Heart left ventricle (tissue), 16 donors: ENCODE measurements at regions of chr18 and their contacts with region 1.

Region 1: GRCh38 chr18:31255953-31256352 is 62.0 kb upstream of the DSG1 start:
- DNase-seq: no peak
- ATAC-seq: no peak
- H3K4me3 ChIP-seq: no peak overlapping the region
- H3K27ac ChIP-seq: no peak overlapping the region
- H3K4me1 ChIP-seq: peaks cover 0 to 5% (median 0%) of the 10 kb centered on the region in 12 donors
- H3K27me3 ChIP-seq: no peaks in the 10 kb centered on the region
- CTCF ChIP-seq: no peak
- POLR2A ChIP-seq: no peak

Region 2: DNA sequence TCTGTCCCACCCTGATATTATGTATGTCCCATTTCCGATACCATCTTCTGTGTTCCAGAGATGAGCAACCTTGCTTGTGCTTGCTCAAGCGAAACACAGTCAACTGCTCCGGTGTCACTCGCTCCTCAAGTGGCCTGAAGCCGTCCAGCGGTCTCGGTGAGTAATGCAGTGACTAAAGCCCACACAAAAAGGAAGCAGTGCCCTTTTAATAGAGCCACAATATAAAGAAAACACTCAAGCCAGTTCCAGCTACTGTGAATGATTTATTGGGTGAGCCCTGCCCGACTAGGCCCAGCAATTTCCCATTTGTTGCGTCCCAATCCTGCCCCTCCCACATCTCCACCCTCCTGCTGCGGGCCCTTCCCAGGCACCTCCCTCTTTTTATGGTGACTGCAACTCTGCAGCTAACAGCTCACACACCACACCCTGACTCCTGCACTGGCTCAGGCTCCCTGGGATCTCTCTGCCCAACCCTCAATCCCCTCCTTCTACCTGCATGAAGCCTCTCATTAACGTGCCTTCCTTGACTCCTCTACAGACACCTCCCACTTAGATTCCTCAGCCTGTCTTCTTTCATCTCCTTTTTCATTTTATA is 49.1 kb before region 1 on chr18:
- intact Hi-C with region 1: no loop called
- DNase-seq: peak in 4 of 5 donors; percentile 43 to 70 (median 56)
- ATAC-seq: peak; percentile 73 to 95 (median 86)
- H3K4me3 ChIP-seq: peak overlapping the region in 9 of 12 donors; percentile 15 to 41 (median 30)
- H3K27ac ChIP-seq: peak overlapping the region in 9 of 12 donors; percentile 17 to 72 (median 44)
- H3K4me1 ChIP-seq: peaks cover 0 to 39% (median 0%) of the 10 kb centered on the region in 12 donors
- H3K27me3 ChIP-seq: no peaks in the 10 kb centered on the region
- CTCF ChIP-seq: peak in 2 of 12 donors; percentile 9 to 13
- POLR2A ChIP-seq: peak in 1 of 2 donors; percentile 32

Region 3: GRCh38 chr18:31316974-31317373 is 61.0 kb after region 1 on chr18:
- intact Hi-C with region 1: loop called in 1 of 10 experiments (anchors 10 kb)
- DNase-seq: no peak
- ATAC-seq: peak in 2 of 4 donors; percentile 24 to 39
- H3K4me3 ChIP-seq: no peak overlapping the region
- H3K27ac ChIP-seq: no peak overlapping the region
- H3K4me1 ChIP-seq: no peaks in the 10 kb centered on the region
- H3K27me3 ChIP-seq: no peaks in the 10 kb centered on the region
- CTCF ChIP-seq: no peak
- POLR2A ChIP-seq: no peak